ENCODE measurements at regions of chr11 and their contacts with region 1.

Region 1: GRCh38 chr11:14643697-14644225 is at the start of gene PDE3B:
- DNase-seq: peak; percentile 41 to 95 (median 70)

Region 2: GRCh38 chr11:14537134-14537599 is 106.6 kb before region 1 on chr11:
- intact Hi-C with region 1: loop called (anchors 5 kb)
- DNase-seq: no peak

Region 3: GRCh38 chr11:14577835-14578529 is 65.8 kb before region 1 on chr11:
- intact Hi-C with region 1: no loop called
- DNase-seq: no peak

Region 4: DNA sequence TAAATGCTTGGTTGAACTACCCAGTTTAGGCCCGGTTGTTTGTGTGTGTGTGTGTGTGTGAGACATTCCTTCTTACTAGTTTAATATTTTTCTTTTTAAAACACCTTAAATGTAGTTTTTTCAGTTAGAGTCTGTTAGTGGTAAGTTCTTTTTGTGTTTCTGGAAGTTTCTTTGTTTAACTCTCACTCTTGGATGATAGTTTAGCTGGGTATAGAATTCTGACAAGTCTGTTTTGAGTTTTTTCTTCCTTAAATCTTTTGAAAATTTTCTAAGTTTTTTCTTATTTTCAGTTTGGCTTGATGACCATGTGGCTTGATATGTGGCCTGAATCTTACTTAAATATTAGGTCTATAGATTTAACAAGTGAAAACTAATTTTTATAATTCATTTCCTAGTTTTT is 60.0 kb after region 1 on chr11:
- intact Hi-C with region 1: loop called (anchors 10 kb)
- DNase-seq: no peak